ENCODE measurements at regions of chr18 and their contacts with region 1.

Region 1: GRCh38 chr18:3623769-3624545 is 174.0 kb downstream of the TGIF1 start:
- DNase-seq: peak; percentile 83 to 97 (median 85)
- ATAC-seq: peak; percentile 86
- H3K4me3 ChIP-seq: peak overlapping the region; percentile 26
- H3K27ac ChIP-seq: peak overlapping the region; percentile 98
- H3K4me1 ChIP-seq: peaks cover 59 to 66% of the 10 kb centered on the region in 2 experiments
- H3K27me3 ChIP-seq: no peaks in the 10 kb centered on the region
- CTCF ChIP-seq: no peak; a peak in 1 of 6 replicates
- EP300 ChIP-seq: peak; percentile 81
- POLR2A ChIP-seq: peak; percentile 92
- RAD21 ChIP-seq: no peak; a peak in 2 of 4 replicates

Region 2: DNA sequence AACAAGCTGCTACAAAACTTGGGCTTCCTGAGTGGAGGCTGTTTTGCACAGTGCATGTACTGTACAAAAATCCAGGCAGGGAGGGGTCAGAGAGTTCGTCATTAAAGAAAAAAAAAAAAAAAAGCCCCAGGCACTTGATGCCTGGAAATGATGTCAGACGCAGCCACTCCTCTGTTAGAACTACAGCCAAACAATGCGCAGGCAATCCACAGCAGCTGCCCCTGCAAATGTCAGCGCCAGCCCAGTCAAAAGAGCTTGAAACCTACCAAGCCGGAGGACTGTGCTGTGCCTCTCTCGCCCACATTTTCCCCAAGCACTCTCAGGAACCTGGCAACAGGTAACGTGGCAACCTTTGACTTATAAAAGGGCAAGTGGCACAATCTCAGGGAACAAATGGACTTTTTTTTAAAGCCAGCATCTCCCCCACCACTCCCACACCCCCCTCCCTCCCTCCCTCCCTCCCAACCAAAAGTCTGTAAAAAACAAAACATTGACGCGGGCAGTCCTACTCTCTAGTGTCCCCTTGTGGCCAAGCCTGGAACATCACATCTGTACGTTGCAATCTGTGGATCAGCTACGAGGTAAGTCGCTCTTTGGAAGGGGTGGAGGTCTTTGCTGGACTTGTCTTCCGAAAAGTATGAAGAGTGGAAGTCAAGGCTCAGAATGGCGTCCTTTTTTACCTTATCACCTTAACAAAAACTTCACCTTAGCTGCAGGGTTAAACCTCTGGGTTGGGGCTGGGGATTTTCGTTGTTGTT is 29.9 kb before region 1 on chr18:
- CTCF ChIA-PET with region 1: no interaction called
- POLR2A ChIA-PET with region 1: interaction called, 12 read pairs
- in situ Hi-C with region 1: no loop called
- intact Hi-C with region 1: no loop called
- DNase-seq: peak; percentile 82 to 97 (median 86)
- ATAC-seq: peak; percentile 61
- H3K4me3 ChIP-seq: peak overlapping the region; percentile 42
- H3K27ac ChIP-seq: peak overlapping the region; percentile 94
- H3K4me1 ChIP-seq: peaks cover 44 to 60% of the 10 kb centered on the region in 2 experiments
- H3K27me3 ChIP-seq: no peaks in the 10 kb centered on the region
- CTCF ChIP-seq: peak; percentile 87 to 94 (median 90)
- EP300 ChIP-seq: peak; percentile 70
- POLR2A ChIP-seq: no peak
- RAD21 ChIP-seq: peak; percentile 48 to 66

Region 3: DNA sequence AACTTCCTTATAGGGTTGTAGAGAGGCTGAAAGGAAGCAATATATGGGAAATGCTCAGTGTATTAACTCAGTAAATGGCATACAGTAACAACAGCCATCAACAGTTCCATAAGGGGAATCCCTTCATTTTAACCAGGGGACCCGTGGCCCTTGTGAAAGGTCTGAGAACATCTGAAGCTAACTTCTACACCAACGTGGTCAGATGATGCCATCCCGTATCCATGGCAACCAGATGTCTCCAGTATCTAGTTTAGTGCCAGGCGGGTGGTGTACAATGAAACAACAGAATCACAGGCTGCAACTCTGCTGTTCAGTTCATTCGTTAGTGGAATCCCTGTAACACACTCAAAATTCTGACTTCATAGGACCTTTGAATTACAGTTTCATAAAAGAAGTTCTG is 11.6 kb before region 1 on chr18:
- CTCF ChIA-PET with region 1: no interaction called
- POLR2A ChIA-PET with region 1: interaction called, 80 read pairs
- in situ Hi-C with region 1: no loop called
- intact Hi-C with region 1: no loop called
- DNase-seq: no peak
- ATAC-seq: no peak
- H3K4me3 ChIP-seq: no peak overlapping the region
- H3K27ac ChIP-seq: no peak overlapping the region
- H3K4me1 ChIP-seq: peaks cover 38 to 58% of the 10 kb centered on the region in 2 experiments
- H3K27me3 ChIP-seq: no peaks in the 10 kb centered on the region
- CTCF ChIP-seq: no peak
- EP300 ChIP-seq: no peak
- POLR2A ChIP-seq: no peak
- RAD21 ChIP-seq: no peak

Region 4: DNA sequence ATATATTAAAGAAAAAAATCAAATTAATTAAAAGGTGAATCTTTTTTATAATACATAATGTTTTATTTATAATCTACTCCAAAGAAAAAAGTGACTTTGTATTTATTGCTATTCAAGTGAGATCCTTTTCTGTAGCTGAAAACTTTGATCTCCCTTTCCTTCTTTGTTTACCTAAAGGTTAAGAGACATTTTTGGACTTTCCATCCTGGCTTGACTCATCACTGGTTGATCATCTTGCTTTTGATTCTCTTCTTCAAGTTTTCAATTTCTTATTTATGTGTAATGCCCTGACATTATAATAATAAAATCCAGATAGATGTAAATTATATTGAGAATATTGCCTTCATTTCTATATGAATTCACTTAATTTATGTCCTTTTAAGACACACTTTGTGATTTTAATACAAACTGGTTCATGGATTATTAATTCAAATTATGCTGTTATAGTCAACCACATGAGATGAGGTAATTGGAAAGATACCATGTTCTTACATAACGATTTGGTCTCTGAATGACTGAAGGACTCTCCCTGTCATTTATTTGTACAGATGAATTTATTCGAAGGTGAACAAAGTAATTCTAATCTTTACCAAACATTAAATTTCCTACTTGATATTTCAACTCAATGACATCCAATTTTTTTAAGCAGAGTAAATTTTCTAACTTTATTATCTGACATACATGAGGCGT is 10.4 kb after region 1 on chr18:
- CTCF ChIA-PET with region 1: no interaction called
- POLR2A ChIA-PET with region 1: interaction called, 12 read pairs
- in situ Hi-C with region 1: no loop called
- intact Hi-C with region 1: no loop called
- DNase-seq: no peak
- ATAC-seq: no peak
- H3K4me3 ChIP-seq: no peak overlapping the region
- H3K27ac ChIP-seq: no peak overlapping the region
- H3K4me1 ChIP-seq: peaks cover 15 to 17% of the 10 kb centered on the region in 2 experiments
- H3K27me3 ChIP-seq: no peaks in the 10 kb centered on the region
- CTCF ChIP-seq: no peak
- EP300 ChIP-seq: no peak
- POLR2A ChIP-seq: no peak
- RAD21 ChIP-seq: no peak

Region 5: GRCh38 chr18:3645384-3646156 is 21.6 kb after region 1 on chr18:
- CTCF ChIA-PET with region 1: interaction called, 5 read pairs
- POLR2A ChIA-PET with region 1: interaction called, 12 read pairs
- in situ Hi-C with region 1: no loop called
- intact Hi-C with region 1: no loop called
- DNase-seq: no peak
- ATAC-seq: no peak
- H3K4me3 ChIP-seq: no peak overlapping the region
- H3K27ac ChIP-seq: no peak overlapping the region
- H3K4me1 ChIP-seq: peaks cover 11 to 20% of the 10 kb centered on the region in 2 experiments
- H3K27me3 ChIP-seq: no peaks in the 10 kb centered on the region
- CTCF ChIP-seq: no peak
- EP300 ChIP-seq: no peak
- POLR2A ChIP-seq: no peak
- RAD21 ChIP-seq: no peak

Region 6: DNA sequence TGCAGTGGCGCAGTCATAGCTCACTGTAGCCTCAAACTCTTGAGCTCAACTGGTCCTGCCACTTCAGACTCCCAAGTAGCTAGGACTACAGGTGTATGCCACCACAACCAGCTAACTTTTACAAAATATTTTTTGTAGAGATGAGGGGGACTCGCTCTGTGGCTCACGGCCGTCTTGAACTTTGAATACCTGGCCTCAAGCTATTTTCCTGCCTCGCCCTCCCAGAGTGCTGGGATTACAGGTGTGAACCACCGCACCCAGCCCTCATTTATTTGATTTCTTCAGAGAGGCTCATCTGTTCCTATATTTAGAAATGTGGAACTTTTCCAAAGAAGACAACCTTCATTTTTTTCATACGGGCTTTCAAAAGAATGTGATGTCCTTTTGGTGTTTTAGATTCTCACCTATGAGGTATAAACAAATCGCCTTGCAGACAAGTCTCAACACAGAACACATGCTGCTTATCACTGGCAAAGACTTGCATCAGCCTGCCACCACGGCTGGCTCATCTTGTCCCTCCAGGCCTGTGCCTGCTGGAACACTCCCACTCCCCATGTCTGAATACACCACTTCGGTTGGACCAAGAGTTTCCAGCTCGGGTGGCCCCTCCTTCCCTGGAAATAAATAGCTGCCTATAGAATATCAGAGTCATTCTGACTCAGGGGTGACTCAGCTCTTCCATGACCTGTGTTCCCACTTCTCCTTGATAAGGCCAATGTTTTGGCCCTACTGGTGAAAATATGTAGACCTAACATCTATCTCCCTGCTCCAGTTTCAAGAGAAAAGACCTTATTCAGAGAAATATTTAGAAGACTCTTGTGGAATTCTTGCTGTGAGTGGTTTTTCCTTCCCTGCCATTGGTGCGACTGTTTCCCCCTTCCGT is 28.7 kb after region 1 on chr18:
- CTCF ChIA-PET with region 1: interaction called, 5 read pairs
- POLR2A ChIA-PET with region 1: interaction called, 37 read pairs
- in situ Hi-C with region 1: no loop called
- intact Hi-C with region 1: loop called (anchors 1 kb)
- DNase-seq: peak; percentile 97 to 100 (median 98)
- ATAC-seq: peak; percentile 86
- H3K4me3 ChIP-seq: peak overlapping the region; percentile 43
- H3K27ac ChIP-seq: peak overlapping the region; percentile 83
- H3K4me1 ChIP-seq: peaks cover 57 to 64% of the 10 kb centered on the region in 2 experiments
- H3K27me3 ChIP-seq: no peaks in the 10 kb centered on the region; a peak in 1 of 5 replicates
- CTCF ChIP-seq: peak in 2 of 3 experiments; percentile 9 to 43; a peak in 3 of 6 replicates
- EP300 ChIP-seq: peak; percentile 99
- POLR2A ChIP-seq: no peak
- RAD21 ChIP-seq: peak in 1 of 2 experiments; percentile 29; a peak in 3 of 4 replicates

Measured in K562 (cell line).